ENCODE measurements at regions of chr12 and their contacts with region 1.

Region 1: GRCh38 chr12:107759410-107759809 is 1.5 kb downstream of the PRDM4 start:
- DNase-seq: no peak
- ATAC-seq: peak in 2 of 4 donors; percentile 9 to 49
- H3K4me3 ChIP-seq: peak overlapping the region in 1 of 4 donors; percentile 91
- H3K27ac ChIP-seq: no peak overlapping the region
- H3K4me1 ChIP-seq: peaks cover 6 to 16% (median 15%) of the 10 kb centered on the region in 3 donors
- H3K27me3 ChIP-seq: no peaks in the 10 kb centered on the region
- CTCF ChIP-seq: no peak

Region 2: GRCh38 chr12:107685360-107686248 is 73.8 kb before region 1 on chr12 and contains the start of gene PWP1:
- intact Hi-C with region 1: loop called in 2 of 3 experiments (anchors 10 kb)
- DNase-seq: peak; percentile 92 to 99 (median 96)
- ATAC-seq: peak; percentile 95 to 99 (median 98)
- H3K4me3 ChIP-seq: peak within 1 kb of the TSS; percentile 80 to 95 (median 91)
- H3K27ac ChIP-seq: peak within 1 kb of the TSS; percentile 58 to 77 (median 70)
- H3K4me1 ChIP-seq: peaks cover 0 to 8% (median 0%) of the 10 kb centered on the region in 3 donors
- H3K27me3 ChIP-seq: no peaks in the 10 kb centered on the region
- CTCF ChIP-seq: no peak
- total RNA-seq, gene PWP1: 12.5 to 21.8 (median 14.8) TPM

Measured in pancreas (tissue), 10 donors.